CD14-positive monocyte (primary cell): ENCODE measurements at regions of chr7 and their contacts with region 1.

Region 1: GRCh38 chr7:55946545-55946944 is 5.1 kb upstream of the MRPS17 start:
- DNase-seq: peak in 1 of 3 donors; percentile 65
- H3K4me3 ChIP-seq: no peak overlapping the region
- H3K4me3 Mint-ChIP-seq: no peak overlapping the region
- H3K27ac ChIP-seq: no peak overlapping the region
- H3K27ac Mint-ChIP-seq: no peak overlapping the region
- H3K4me1 ChIP-seq: no peaks in the 10 kb centered on the region
- H3K4me1 Mint-ChIP-seq: no peaks in the 10 kb centered on the region
- H3K27me3 ChIP-seq: no peaks in the 10 kb centered on the region
- H3K27me3 Mint-ChIP-seq: peaks cover 0 to 3% (median 2%) of the 10 kb centered on the region in 3 donors
- CTCF ChIP-seq: no peak

Region 2: DNA sequence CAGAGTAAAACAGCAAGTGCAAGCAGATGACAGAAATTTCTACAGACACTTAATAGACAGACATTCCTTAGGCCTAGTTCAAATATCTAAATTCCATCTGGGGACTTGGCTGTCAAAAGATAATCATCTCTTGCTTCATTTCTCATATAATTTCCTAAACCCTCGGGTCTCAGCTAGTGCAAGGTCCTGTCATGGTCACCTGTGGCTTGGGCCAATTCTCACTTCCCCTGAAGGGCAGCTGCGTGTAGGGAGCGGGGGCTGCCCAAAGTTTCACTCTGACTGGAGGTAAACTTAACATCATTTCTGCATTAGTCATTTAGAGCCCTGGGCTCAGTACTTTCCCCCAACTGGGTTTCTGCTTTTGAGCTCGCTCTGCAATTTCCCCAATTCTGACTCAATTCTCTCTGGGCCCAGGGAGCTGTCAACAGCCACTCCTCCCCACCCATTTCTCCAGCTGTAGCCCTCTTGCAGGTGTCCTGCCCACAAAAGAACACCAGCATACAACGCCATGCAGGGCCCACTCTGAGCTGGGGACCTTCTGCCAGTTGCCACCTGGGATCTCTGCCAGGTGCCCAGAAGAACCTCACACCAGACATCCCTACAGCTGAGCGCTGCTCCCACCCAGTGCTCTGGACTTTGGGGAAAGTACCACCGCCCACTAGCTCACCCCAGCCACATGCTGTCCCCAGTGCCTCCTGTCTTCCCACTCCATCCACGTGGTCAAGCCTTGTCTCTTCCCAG is 412.2 kb before region 1 on chr7:
- intact Hi-C with region 1: no loop called
- DNase-seq: peak; percentile 97 to 100 (median 99)
- H3K4me3 ChIP-seq: no peak overlapping the region
- H3K4me3 Mint-ChIP-seq: peak overlapping the region; percentile 58 to 71
- H3K27ac ChIP-seq: peak overlapping the region; percentile 97 to 98
- H3K27ac Mint-ChIP-seq: peak overlapping the region; percentile 98 to 99 (median 99)
- H3K4me1 ChIP-seq: peaks cover 66 to 71% of the 10 kb centered on the region in 2 donors
- H3K4me1 Mint-ChIP-seq: peaks cover 75% of the 10 kb centered on the region
- H3K27me3 ChIP-seq: no peaks in the 10 kb centered on the region
- H3K27me3 Mint-ChIP-seq: peaks cover 0 to 2% (median 0%) of the 10 kb centered on the region in 3 donors
- CTCF ChIP-seq: no peak

Region 3: GRCh38 chr7:55898287-55898686 is 48.3 kb before region 1 on chr7:
- intact Hi-C with region 1: loop called in 1 of 2 experiments (anchors 5 kb)
- DNase-seq: no peak
- H3K4me3 ChIP-seq: no peak overlapping the region
- H3K4me3 Mint-ChIP-seq: no peak overlapping the region
- H3K27ac ChIP-seq: no peak overlapping the region
- H3K27ac Mint-ChIP-seq: no peak overlapping the region
- H3K4me1 ChIP-seq: no peaks in the 10 kb centered on the region
- H3K4me1 Mint-ChIP-seq: no peaks in the 10 kb centered on the region
- H3K27me3 ChIP-seq: no peaks in the 10 kb centered on the region
- H3K27me3 Mint-ChIP-seq: peaks cover 0 to 2% (median 2%) of the 10 kb centered on the region in 3 donors
- CTCF ChIP-seq: no peak

Region 4: DNA sequence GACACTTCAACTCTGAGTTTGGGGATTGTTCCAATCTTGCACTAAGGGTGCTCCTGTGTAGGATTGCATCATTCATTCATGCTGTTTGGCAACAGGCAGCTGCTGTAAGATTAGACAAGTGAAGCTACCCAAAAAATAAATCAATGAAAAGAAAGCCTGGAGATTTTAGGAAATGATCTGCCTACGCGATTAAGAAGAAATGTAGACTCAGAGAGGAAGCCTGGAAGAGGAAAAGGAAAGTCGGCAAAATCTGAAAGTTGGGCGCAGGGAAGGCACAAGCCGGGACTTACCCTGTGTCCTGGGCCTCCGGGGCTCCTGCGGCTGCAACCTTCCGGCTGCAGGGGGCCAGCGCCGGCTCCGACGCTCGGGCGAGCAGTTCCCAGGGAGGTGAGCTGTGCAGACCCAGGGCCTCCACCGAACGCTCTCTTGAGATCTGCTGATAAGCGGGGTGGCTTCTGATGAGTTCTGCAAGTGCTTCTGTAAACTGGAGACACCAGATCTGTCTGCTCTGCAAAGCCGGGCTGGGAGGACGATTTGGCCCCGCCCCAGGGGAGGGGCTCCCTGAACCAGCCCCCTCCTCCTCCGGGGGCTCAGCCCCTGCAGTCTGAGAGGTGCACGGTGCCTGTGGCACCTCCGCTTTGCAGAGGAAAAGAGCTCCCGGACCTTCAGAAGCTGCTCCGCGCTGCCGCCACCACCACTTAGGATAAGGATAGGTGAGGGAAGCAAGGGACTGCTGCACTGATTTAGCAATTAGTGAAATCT is 87.3 kb after region 1 on chr7:
- intact Hi-C with region 1: no loop called
- DNase-seq: peak; percentile 48 to 65 (median 61)
- H3K4me3 ChIP-seq: peak overlapping the region; percentile 66 to 99 (median 80)
- H3K4me3 Mint-ChIP-seq: peak overlapping the region; percentile 82 to 97
- H3K27ac ChIP-seq: peak overlapping the region; percentile 66 to 72
- H3K27ac Mint-ChIP-seq: peak overlapping the region; percentile 75 to 93 (median 85)
- H3K4me1 ChIP-seq: peaks cover 0 to 5% of the 10 kb centered on the region in 2 donors
- H3K4me1 Mint-ChIP-seq: peaks cover 14% of the 10 kb centered on the region
- H3K27me3 ChIP-seq: no peaks in the 10 kb centered on the region
- H3K27me3 Mint-ChIP-seq: peaks cover 0 to 2% (median 1%) of the 10 kb centered on the region in 3 donors
- CTCF ChIP-seq: peak; percentile 16